Panc1 (cell line): ENCODE measurements at regions of chr7 and their contacts with region 1.

Region 1: DNA sequence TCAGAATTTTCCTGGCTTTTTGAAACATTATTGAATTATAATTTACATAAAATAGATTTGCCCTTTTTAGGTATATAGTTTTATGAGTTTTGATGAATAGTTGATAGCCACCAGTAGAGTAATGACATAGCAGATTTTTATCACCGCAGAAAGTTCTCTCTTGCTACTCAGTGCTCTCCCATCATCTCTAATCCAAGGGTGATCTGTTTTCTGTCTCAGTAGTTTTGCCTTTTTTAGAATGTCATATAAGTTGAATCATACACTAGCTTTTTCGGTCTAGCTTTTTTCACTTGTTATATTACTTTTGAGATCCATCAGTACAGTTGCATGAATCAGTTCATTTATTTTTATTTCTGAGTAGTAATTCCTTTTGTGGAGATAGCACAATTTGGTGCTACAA is 17.9 kb downstream of the RSBN1L start:
- DNase-seq: no peak
- ATAC-seq: no peak
- H3K4me3 ChIP-seq: no peak overlapping the region
- H3K27ac ChIP-seq: no peak overlapping the region
- H3K4me1 ChIP-seq: no peaks in the 10 kb centered on the region
- H3K27me3 ChIP-seq: no peaks in the 10 kb centered on the region
- CTCF ChIP-seq: no peak

Region 2: GRCh38 chr7:77199013-77199966 is 514.9 kb before region 1 on chr7 and contains the start of gene FGL2:
- CTCF ChIA-PET with region 1: no interaction called
- POLR2A ChIA-PET with region 1: no interaction called
- in situ Hi-C with region 1: no loop called
- intact Hi-C with region 1: no loop called
- DNase-seq: no peak
- ATAC-seq: no peak
- H3K4me3 ChIP-seq: no peak within 1 kb of the TSS
- H3K27ac ChIP-seq: no peak within 1 kb of the TSS
- H3K4me1 ChIP-seq: no peaks in the 10 kb centered on the region
- H3K27me3 ChIP-seq: peaks cover 2% of the 10 kb centered on the region; the same call in 1 of the 2 replicates
- CTCF ChIP-seq: no peak
- total RNA-seq, gene FGL2: not detected

Region 3: GRCh38 chr7:77606562-77606961 is 107.6 kb before region 1 on chr7:
- CTCF ChIA-PET with region 1: no interaction called
- POLR2A ChIA-PET with region 1: no interaction called
- in situ Hi-C with region 1: no loop called
- intact Hi-C with region 1: no loop called
- DNase-seq: no peak
- ATAC-seq: no peak
- H3K4me3 ChIP-seq: no peak overlapping the region
- H3K27ac ChIP-seq: no peak overlapping the region
- H3K4me1 ChIP-seq: no peaks in the 10 kb centered on the region
- H3K27me3 ChIP-seq: no peaks in the 10 kb centered on the region
- CTCF ChIP-seq: no peak

Region 4: GRCh38 chr7:77674878-77675277 is 39.3 kb before region 1 on chr7:
- CTCF ChIA-PET with region 1: no interaction called
- POLR2A ChIA-PET with region 1: interaction called, 16 read pairs
- in situ Hi-C with region 1: no loop called
- intact Hi-C with region 1: no loop called
- DNase-seq: no peak
- ATAC-seq: peak; percentile 71; the same call in 1 of the 2 replicates
- H3K4me3 ChIP-seq: no peak overlapping the region
- H3K27ac ChIP-seq: no peak overlapping the region
- H3K4me1 ChIP-seq: no peaks in the 10 kb centered on the region
- H3K27me3 ChIP-seq: no peaks in the 10 kb centered on the region
- CTCF ChIP-seq: no peak

Region 5: DNA sequence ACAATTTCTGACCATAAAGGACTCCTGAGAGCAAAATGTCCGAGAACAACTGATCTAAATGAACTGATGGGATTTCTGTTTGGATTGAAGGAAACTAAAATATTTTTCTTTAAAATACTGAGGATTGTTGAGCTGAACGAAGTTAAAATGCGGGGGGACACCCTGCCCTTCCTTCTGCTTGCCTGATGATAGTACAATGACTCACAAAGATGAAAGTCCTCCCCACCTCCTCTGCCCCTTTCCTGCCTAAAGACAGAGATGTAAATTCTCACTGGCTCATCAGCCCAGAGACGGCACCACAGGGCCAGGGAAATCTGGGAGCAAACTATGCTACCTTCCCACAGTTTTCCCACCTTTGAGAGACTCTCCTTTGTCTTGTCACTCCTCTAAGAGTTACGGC is 265.0 kb after region 1 on chr7:
- CTCF ChIA-PET with region 1: no interaction called
- POLR2A ChIA-PET with region 1: no interaction called
- in situ Hi-C with region 1: no loop called
- intact Hi-C with region 1: no loop called
- DNase-seq: no peak
- ATAC-seq: no peak
- H3K4me3 ChIP-seq: no peak overlapping the region
- H3K27ac ChIP-seq: no peak overlapping the region
- H3K4me1 ChIP-seq: no peaks in the 10 kb centered on the region
- H3K27me3 ChIP-seq: no peaks in the 10 kb centered on the region
- CTCF ChIP-seq: no peak